ENCODE measurements at regions of chr12 and their contacts with region 1.

Region 1: DNA sequence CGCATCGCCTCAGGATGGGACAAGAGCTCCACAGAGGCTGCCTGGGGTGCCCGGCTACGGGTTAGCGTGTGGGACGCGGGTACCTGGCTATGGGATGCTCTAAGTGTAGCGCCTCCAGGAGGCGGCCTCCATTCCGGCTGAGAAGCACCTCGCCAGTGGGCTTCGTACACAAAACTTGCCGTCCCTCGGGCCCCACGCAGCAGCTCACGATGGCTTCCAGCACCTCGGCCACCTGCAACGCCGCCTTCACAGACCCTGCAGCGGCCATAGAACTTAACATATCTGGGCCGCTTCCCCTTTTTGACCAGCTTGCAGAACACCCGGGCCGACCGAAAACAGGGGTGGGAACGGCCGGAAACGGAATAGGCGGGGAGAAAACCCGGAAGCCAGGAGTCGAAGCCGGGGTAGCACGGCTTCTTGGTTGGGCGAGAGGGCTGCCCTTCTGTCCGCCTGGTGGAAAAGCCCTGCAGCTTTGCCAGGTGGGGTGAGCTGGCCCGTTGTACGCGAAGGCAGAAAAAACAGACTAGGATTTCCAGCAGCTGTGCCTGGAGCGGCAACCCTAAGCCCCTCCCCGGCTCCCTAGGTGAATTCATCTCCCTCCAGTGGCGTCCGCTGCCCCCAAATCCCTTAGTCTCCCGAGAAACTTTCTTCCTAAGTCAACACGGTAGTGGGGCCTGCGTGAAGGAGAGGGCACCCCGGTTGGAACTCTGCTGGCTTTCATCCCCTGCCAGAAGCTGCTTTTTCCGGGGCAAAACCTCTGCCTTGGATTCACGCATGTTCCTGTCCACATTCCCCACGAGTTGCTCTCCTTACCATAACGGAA is at the start of gene BBS10:
- DNase-seq: peak; percentile 93
- H3K4me3 Mint-ChIP-seq: peak within 1 kb of the TSS; percentile 91
- H3K27ac Mint-ChIP-seq: peak within 1 kb of the TSS; percentile 90
- H3K4me1 Mint-ChIP-seq: peaks cover 25% of the 10 kb centered on the region
- H3K27me3 Mint-ChIP-seq: no peaks in the 10 kb centered on the region
- total RNA-seq, gene BBS10: 3.2 to 3.4 TPM

Region 2: GRCh38 chr12:75334384-75335030 is 1013.8 kb before region 1 on chr12 and contains the start of gene GLIPR1L1:
- CTCF ChIA-PET with region 1: no interaction called
- POLR2A ChIA-PET with region 1: no interaction called
- intact Hi-C with region 1: loop called (anchors 10 kb)
- DNase-seq: peak; percentile 88
- H3K4me3 Mint-ChIP-seq: peak within 1 kb of the TSS; percentile 59
- H3K27ac Mint-ChIP-seq: no peak within 1 kb of the TSS
- H3K4me1 Mint-ChIP-seq: peaks cover 22% of the 10 kb centered on the region
- H3K27me3 Mint-ChIP-seq: peaks cover 16% of the 10 kb centered on the region
- total RNA-seq, gene GLIPR1L1: not detected

Region 3: DNA sequence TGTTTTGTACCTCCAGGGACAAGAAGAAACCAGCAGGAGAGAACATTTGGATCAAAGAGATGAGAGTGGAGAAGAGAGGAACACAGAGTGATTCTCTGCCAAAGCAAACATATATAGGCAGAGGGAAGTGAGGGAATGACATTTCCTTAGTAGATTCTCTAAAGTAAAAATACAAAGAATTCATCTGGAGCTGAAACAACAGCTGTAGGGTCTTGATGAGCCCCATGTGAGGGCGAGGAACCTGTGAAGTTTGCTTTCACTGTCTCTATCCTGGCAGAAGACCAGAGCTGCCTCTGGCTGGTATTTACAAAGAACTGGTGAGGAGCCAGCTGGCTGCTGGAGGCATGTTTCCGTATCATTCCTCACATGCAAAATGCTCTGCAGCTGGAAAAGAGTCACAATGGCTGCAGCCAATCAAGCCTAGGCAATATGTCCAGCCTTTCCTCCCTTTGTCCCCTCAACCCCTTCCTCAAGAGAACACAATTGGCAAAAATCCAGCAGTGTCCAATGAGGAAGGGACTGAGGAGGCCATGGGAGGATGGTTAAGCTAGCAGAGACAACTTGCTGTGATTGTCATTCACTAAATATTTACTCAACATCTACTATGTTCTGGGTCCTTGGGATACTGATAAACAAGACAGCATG is 439.2 kb before region 1 on chr12:
- CTCF ChIA-PET with region 1: no interaction called
- POLR2A ChIA-PET with region 1: no interaction called
- intact Hi-C with region 1: no loop called
- DNase-seq: no peak
- H3K4me3 Mint-ChIP-seq: no peak overlapping the region
- H3K27ac Mint-ChIP-seq: no peak overlapping the region
- H3K4me1 Mint-ChIP-seq: peaks cover 16% of the 10 kb centered on the region
- H3K27me3 Mint-ChIP-seq: no peaks in the 10 kb centered on the region

Region 4: GRCh38 chr12:75944097-75944904 is 404.0 kb before region 1 on chr12:
- CTCF ChIA-PET with region 1: no interaction called
- POLR2A ChIA-PET with region 1: no interaction called
- intact Hi-C with region 1: loop called (anchors 5 kb)
- DNase-seq: peak; percentile 42
- H3K4me3 Mint-ChIP-seq: peak overlapping the region; percentile 34
- H3K27ac Mint-ChIP-seq: peak overlapping the region; percentile 95
- H3K4me1 Mint-ChIP-seq: peaks cover 29% of the 10 kb centered on the region
- H3K27me3 Mint-ChIP-seq: no peaks in the 10 kb centered on the region

Region 5: GRCh38 chr12:75964150-75964549 is 384.1 kb before region 1 on chr12:
- CTCF ChIA-PET with region 1: no interaction called
- POLR2A ChIA-PET with region 1: no interaction called
- intact Hi-C with region 1: no loop called
- DNase-seq: no peak
- H3K4me3 Mint-ChIP-seq: no peak overlapping the region
- H3K27ac Mint-ChIP-seq: no peak overlapping the region
- H3K4me1 Mint-ChIP-seq: peaks cover 27% of the 10 kb centered on the region
- H3K27me3 Mint-ChIP-seq: no peaks in the 10 kb centered on the region

Region 6: GRCh38 chr12:76158518-76159321 is 189.6 kb before region 1 on chr12:
- CTCF ChIA-PET with region 1: interaction called, 6 read pairs
- POLR2A ChIA-PET with region 1: interaction called, 6 read pairs
- intact Hi-C with region 1: loop called (anchors 1 kb)
- DNase-seq: peak; percentile 91
- H3K4me3 Mint-ChIP-seq: peak overlapping the region; percentile 16
- H3K27ac Mint-ChIP-seq: peak overlapping the region; percentile 25
- H3K4me1 Mint-ChIP-seq: peaks cover 16% of the 10 kb centered on the region
- H3K27me3 Mint-ChIP-seq: peaks cover 12% of the 10 kb centered on the region

Region 7: GRCh38 chr12:76366163-76366562 is 17.9 kb after region 1 on chr12:
- CTCF ChIA-PET with region 1: no interaction called
- POLR2A ChIA-PET with region 1: interaction called, 5 read pairs
- intact Hi-C with region 1: loop called (anchors 1 kb)
- DNase-seq: no peak
- H3K4me3 Mint-ChIP-seq: no peak overlapping the region
- H3K27ac Mint-ChIP-seq: no peak overlapping the region
- H3K4me1 Mint-ChIP-seq: peaks cover 11% of the 10 kb centered on the region
- H3K27me3 Mint-ChIP-seq: no peaks in the 10 kb centered on the region

Region 8: DNA sequence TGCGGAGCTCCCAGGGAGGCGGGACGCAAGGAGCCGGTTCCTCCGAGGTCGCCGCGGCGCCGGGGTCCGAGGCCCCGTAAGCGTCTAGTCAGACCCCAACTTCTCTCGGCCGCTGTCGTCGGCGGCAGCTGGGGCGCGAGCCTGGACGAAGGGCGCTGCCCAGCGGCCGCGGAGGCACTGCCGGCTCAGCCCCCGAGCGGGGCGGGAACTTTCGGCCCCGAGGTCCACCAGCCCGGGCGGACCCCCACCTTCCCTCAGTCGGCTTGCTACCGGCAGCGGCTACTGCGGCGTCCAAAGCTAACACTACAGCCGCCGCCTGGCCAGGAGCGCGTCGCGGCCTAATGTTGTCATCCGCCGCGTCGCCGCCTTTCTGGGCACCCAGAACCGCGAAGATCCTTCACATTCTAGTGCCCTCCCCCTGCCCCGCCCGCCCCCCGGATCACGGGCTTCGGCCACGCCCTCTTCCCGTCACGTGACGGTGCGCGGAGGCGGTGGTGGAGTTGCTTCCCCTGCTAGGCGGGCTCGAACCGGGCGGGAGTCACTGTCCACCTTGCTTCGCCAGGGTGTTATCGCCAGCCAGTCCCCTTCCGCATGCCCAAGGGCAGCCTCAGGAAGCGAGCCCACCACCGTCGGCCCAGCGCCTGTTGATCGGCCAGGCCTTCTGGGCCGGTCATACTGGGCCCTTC is 211.3 kb after region 1 on chr12 and contains the start of gene OSBPL8:
- CTCF ChIA-PET with region 1: no interaction called
- POLR2A ChIA-PET with region 1: interaction called, 9 read pairs
- intact Hi-C with region 1: loop called (anchors 1 kb)
- DNase-seq: peak; percentile 98
- H3K4me3 Mint-ChIP-seq: peak within 1 kb of the TSS; percentile 88
- H3K27ac Mint-ChIP-seq: peak within 1 kb of the TSS; percentile 97
- H3K4me1 Mint-ChIP-seq: peaks cover 34% of the 10 kb centered on the region
- H3K27me3 Mint-ChIP-seq: no peaks in the 10 kb centered on the region
- total RNA-seq, gene OSBPL8: 69.8 to 73.7 TPM